ENCODE measurements at regions of chr2 and their contacts with region 1.

Region 1: DNA sequence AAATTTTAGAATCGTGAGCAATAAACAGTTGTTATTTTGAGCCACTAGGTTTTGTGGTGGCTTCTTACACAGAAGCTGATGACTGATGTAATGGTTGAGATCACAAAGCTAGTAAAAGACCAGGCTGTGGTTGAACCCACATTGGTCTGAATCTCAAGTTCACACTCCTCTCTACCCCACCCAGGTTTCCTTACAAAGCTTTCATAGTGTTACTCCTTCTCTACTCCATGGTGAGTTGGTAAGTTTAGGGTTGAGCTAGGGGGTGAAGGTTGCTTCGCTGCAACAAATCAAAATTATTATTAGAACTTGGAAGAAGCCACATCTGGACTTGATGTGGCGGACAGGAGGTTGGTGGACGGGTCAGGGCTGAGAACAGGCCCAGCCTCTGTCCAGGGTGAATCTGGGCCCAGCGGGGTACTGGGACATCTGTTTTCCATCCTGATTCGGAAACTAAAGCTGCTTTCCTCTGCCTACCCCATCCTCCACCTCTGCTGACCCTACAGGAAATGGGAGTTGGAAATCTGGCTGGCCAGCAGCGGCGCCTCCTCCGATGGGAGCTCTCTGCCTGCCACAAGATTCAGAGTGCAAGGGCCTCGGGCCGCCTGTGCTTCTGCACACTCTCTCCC is 86.3 kb downstream of the ZFP36L2 start:
- DNase-seq: peak; percentile 77
- ATAC-seq: peak; percentile 37
- H3K4me3 Mint-ChIP-seq: peak overlapping the region; percentile 55
- H3K27ac Mint-ChIP-seq: peak overlapping the region; percentile 87
- H3K4me1 Mint-ChIP-seq: peaks cover 74% of the 10 kb centered on the region
- H3K27me3 Mint-ChIP-seq: no peaks in the 10 kb centered on the region
- CTCF ChIP-seq: no peak

Region 2: DNA sequence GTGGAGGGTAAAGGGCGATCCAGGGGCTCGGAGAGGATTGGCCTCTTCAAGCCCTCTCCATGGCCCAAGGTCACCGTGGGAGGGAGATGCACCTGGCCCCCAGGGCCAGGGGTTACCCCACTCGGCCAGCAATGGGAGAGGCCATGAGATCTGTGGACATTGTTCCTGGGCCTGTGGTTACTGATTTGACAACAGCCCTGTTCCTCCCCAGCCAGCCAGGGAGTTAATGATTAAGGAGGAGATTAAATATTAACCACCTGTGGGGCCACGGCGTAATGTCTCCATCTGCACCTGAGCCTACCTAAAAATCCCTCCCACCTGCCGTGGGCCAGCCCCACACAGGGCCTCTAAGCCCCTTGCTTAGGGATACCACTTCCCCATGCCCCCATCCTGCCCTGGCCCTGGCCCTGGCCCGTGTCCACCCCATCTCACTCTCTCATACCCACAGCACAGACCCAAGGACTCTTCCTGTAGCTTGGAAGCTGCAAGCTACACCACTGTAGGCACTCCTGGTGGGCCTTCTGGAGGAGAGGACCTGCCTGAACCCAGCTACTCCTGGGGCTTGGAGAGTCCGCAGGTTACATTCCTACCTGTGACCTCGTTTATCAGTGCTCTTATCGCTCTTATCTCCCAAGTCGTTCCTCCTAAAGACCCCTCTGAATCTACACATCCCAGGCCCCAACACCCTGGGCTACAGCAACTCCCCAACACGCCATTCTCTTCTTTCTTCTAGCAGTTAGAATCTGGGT is 54.2 kb after region 1 on chr2:
- CTCF ChIA-PET with region 1: interaction called, 8 read pairs
- POLR2A ChIA-PET with region 1: interaction called, 4 read pairs
- intact Hi-C with region 1: loop called (anchors 2 kb)
- DNase-seq: no peak
- ATAC-seq: no peak
- H3K4me3 Mint-ChIP-seq: peak overlapping the region; percentile 67
- H3K27ac Mint-ChIP-seq: peak overlapping the region; percentile 87
- H3K4me1 Mint-ChIP-seq: peaks cover 56% of the 10 kb centered on the region
- H3K27me3 Mint-ChIP-seq: no peaks in the 10 kb centered on the region
- CTCF ChIP-seq: no peak